ENCODE measurements at regions of chrX and their contacts with region 1.

Region 1: DNA sequence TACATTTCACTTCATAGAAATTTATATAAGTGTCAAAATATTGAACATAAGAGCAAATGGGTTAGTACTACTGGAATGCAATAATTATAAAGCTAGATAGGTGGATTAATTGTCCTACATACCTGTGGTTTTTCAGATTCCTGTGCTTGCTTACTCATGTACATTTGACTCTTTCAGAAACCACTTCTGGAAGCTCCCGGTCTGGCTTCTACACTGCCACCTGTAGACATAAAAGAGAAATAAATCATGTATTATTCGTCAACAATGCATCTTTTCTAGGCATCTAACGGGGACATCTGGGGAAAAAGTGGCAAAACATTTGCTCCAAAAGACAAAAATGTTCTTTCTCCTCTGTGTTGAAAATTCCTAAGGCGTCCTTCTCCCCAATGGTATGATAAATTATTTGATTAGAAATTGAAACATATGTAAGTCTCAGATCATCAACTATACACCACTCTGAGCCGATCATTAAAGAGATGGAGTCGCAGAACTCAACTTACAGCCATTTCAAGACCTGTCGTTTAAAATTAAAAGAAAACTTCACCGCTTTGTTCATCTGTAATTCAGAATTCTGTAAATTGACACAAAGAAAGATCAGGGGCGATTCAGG is 648.7 kb upstream of the DIPK2B start:
- DNase-seq: peak; percentile 75
- H3K4me3 Mint-ChIP-seq: peak overlapping the region; percentile 89
- H3K27ac Mint-ChIP-seq: peak overlapping the region; percentile 67
- H3K4me1 Mint-ChIP-seq: no peaks in the 10 kb centered on the region
- H3K27me3 Mint-ChIP-seq: peaks cover 14% of the 10 kb centered on the region
- CTCF ChIP-seq: peak; percentile 26

Region 2: GRCh38 chrX:45470346-45470745 is 379.0 kb before region 1 on chrX:
- CTCF ChIA-PET with region 1: no interaction called
- POLR2A ChIA-PET with region 1: no interaction called
- intact Hi-C with region 1: no loop called
- DNase-seq: no peak
- H3K4me3 Mint-ChIP-seq: no peak overlapping the region
- H3K27ac Mint-ChIP-seq: no peak overlapping the region
- H3K4me1 Mint-ChIP-seq: no peaks in the 10 kb centered on the region
- H3K27me3 Mint-ChIP-seq: peaks cover 49% of the 10 kb centered on the region
- CTCF ChIP-seq: no peak

Region 3: GRCh38 chrX:45749375-45749774 is 100.0 kb before region 1 on chrX:
- CTCF ChIA-PET with region 1: no interaction called
- POLR2A ChIA-PET with region 1: interaction called, 10 read pairs
- intact Hi-C with region 1: loop called (anchors 5 kb)
- DNase-seq: no peak
- H3K4me3 Mint-ChIP-seq: no peak overlapping the region
- H3K27ac Mint-ChIP-seq: peak overlapping the region; percentile 60
- H3K4me1 Mint-ChIP-seq: peaks cover 22% of the 10 kb centered on the region
- H3K27me3 Mint-ChIP-seq: peaks cover 25% of the 10 kb centered on the region
- CTCF ChIP-seq: peak; percentile 41

Region 4: GRCh38 chrX:46165411-46165810 is 316.1 kb after region 1 on chrX:
- CTCF ChIA-PET with region 1: no interaction called
- POLR2A ChIA-PET with region 1: interaction called, 3 read pairs
- intact Hi-C with region 1: loop called (anchors 10 kb)
- DNase-seq: no peak
- H3K4me3 Mint-ChIP-seq: no peak overlapping the region
- H3K27ac Mint-ChIP-seq: no peak overlapping the region
- H3K4me1 Mint-ChIP-seq: peaks cover 17% of the 10 kb centered on the region
- H3K27me3 Mint-ChIP-seq: peaks cover 41% of the 10 kb centered on the region
- CTCF ChIP-seq: no peak

Region 5: GRCh38 chrX:46325312-46325877 is 476.0 kb after region 1 on chrX:
- CTCF ChIA-PET with region 1: no interaction called
- POLR2A ChIA-PET with region 1: interaction called, 4 read pairs
- intact Hi-C with region 1: loop called (anchors 5 kb)
- DNase-seq: peak; percentile 86
- H3K4me3 Mint-ChIP-seq: peak overlapping the region; percentile 71
- H3K27ac Mint-ChIP-seq: peak overlapping the region; percentile 60
- H3K4me1 Mint-ChIP-seq: peaks cover 24% of the 10 kb centered on the region
- H3K27me3 Mint-ChIP-seq: peaks cover 53% of the 10 kb centered on the region
- CTCF ChIP-seq: no peak